Spleen (tissue), 13 donors: ENCODE measurements at regions of chr17 and their contacts with region 1.

Region 1: GRCh38 chr17:69335058-69335457 is 8.1 kb upstream of the ABCA5 start:
- DNase-seq: no peak
- H3K4me3 ChIP-seq: no peak overlapping the region
- H3K27ac ChIP-seq: no peak overlapping the region
- H3K4me1 ChIP-seq: no peaks in the 10 kb centered on the region
- H3K27me3 ChIP-seq: peaks cover 0 to 4% (median 0%) of the 10 kb centered on the region in 7 donors
- CTCF ChIP-seq: peak in 9 of 11 experiments; percentile 12 to 53 (median 36)
- POLR2A ChIP-seq: no peak

Region 2: DNA sequence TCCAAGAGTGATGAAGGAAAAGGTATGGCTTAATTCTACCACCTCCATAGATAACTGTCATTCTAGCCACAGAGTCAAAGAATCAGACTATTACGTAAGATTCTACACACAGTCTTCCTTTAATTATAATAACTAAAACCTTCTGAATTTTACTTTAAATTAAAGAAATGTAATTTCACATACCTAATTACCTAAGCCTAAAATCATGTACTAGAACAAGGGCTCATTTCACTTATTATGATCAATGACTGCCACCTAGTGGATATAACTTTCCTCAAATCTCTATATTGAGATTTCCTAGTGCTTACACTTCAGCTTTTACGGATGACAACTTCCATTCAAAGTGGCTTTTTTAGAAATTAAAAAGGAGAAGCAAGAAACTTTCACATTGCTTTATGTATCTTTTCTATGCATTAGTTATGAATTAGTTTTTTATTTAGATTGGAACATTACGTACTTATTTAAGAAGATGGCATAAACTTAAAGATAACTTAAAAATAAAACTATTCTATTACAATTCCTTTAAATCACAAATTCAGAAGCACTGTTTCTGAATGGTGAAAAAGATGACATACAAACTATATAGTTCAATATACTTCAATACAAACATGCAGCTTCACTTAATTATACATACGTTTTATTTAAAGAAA is 88.2 kb before region 1 on chr17:
- intact Hi-C with region 1: no loop called
- DNase-seq: no peak
- H3K4me3 ChIP-seq: no peak overlapping the region
- H3K27ac ChIP-seq: no peak overlapping the region
- H3K4me1 ChIP-seq: peaks cover 0 to 3% (median 0%) of the 10 kb centered on the region in 6 donors
- H3K27me3 ChIP-seq: no peaks in the 10 kb centered on the region
- CTCF ChIP-seq: peak in 10 of 11 experiments; percentile 38 to 65 (median 59)
- POLR2A ChIP-seq: no peak

Region 3: GRCh38 chr17:69404382-69404781 is 69.3 kb after region 1 on chr17:
- intact Hi-C with region 1: loop called (anchors 10 kb)
- DNase-seq: no peak
- H3K4me3 ChIP-seq: no peak overlapping the region
- H3K27ac ChIP-seq: no peak overlapping the region
- H3K4me1 ChIP-seq: no peaks in the 10 kb centered on the region
- H3K27me3 ChIP-seq: peaks cover 0 to 11% (median 0%) of the 10 kb centered on the region in 7 donors
- CTCF ChIP-seq: no peak
- POLR2A ChIP-seq: no peak

Region 4: DNA sequence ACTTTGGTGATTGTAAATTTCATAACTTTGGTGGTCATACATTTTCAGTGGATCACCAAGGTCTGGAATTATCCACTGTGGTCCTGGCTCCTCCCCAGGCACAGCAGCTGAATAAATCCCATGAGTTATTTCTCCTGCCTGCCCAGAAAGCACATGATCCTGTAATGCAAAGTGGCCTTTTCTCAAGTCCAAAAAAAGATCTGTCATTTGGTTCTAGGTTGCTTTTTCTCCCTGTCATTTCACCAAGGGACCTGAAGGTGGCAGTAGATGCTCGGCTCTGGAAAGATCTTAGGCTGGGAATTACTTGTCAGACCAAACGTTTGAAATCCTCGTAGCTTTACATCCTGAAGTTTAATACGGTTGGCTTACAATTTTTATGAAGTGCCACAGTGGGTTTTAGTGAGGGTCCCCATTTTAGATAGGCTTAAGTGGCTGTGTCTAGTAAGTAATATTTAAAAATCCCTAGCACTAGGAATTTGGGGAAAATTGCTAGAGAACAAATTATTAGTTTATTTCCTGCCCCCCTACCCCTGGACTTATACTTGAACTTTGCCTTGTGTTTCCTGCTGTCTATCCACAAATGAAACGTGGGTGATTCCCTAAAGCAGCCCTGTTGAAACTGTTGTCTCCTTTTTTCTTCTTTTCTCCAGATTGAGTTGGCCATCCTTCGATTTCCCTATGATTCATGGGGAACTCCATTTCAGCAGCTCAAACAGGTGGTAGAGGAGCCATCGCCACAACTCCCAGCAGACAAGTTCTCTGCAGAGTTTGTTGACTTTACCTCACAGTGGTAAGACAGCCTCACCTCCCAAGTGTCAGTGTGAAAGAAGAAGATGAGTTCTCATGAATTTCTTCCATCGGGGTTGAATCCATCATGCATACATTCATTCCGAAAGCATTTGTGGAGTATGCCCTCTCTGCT is 191.1 kb after region 1 on chr17:
- intact Hi-C with region 1: loop called (anchors 5 kb)
- DNase-seq: no peak
- H3K4me3 ChIP-seq: no peak overlapping the region
- H3K27ac ChIP-seq: no peak overlapping the region
- H3K4me1 ChIP-seq: peaks cover 0 to 8% (median 2%) of the 10 kb centered on the region in 6 donors
- H3K27me3 ChIP-seq: no peaks in the 10 kb centered on the region
- CTCF ChIP-seq: peak; percentile 46 to 83 (median 76)
- POLR2A ChIP-seq: no peak